ENCODE measurements at regions of chr11 and their contacts with region 1.

Region 1: DNA sequence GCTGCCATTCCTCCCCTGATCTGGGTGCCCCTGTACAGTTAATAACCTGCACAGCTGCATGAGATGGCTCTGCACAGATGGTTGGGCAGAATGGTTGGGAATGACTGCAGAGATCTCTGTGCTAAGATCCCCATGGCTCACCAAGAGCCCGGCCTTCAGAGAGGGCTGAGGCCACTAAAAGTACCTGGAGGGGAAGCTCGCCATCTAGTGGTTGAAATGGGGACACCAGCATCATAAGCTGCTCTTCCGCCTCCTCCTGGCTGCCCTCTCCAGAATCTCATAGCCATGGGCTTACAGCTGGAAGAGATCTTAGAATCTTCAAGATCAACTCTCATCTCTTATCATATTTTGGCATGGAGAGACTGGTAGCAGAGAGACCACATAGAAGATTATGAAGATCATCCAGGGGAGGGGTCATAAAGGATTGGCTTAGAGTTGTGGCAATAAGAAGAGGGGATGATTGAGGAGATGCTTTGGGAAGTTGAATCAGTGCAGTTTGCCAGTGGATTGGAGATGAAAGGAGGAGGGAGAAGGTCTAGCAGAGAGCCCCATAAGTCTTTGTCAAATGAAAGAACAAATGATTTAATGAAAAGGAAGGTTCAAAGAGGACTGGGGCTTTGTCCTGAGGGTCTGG is 22.0 kb upstream of the TLCD5 start:
- DNase-seq: no peak
- H3K4me3 ChIP-seq: no peak overlapping the region
- H3K27me3 ChIP-seq: peaks cover 7% of the 10 kb centered on the region
- CTCF ChIP-seq: peak; percentile 96

Region 2: DNA sequence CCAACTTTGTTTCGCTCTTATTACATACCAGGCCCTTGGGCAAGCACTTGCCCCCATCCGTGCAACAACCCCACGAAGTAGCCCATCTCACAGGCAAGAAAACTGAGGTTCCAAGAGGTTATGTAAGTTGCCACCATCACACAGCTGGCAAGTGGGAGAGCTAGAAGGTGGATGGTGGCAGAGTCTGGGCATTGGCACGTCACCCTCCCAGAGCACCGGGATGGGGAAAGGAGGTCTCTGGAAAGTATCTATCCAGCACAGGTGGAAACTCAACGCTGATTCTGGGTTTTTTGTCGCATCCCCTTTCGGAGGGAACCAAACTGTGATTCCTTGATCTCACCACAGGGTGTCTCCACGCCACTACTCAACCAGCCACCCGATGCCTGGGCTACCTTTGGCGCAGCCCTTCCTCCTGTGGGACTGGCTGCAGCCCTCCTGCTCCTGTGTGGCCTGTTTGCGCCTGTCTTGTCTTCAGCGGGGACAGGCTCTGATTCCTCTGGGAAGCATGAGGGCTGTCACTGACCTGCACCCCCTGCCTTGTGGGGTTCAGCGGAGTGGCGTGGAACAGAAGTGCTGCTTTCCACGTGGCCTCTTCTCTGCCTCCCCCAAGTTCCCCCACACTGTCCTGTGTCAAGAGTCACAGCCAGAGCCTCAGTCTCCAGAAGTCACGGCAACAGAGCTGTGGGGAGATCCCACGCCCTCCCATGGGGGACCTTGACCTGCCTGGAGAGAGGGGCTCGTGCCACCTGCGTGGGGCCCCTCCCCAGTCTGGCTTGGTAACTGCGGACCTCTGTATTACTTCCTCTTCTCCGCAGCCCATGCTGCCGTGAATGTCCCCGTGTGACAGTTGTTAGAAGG is 130.8 kb before region 1 on chr11:
- CTCF ChIA-PET with region 1: interaction called, 187 read pairs
- POLR2A ChIA-PET with region 1: no interaction called
- DNase-seq: no peak
- H3K4me3 ChIP-seq: no peak overlapping the region
- H3K27me3 ChIP-seq: peaks cover 22% of the 10 kb centered on the region
- CTCF ChIP-seq: peak; percentile 80

Region 3: DNA sequence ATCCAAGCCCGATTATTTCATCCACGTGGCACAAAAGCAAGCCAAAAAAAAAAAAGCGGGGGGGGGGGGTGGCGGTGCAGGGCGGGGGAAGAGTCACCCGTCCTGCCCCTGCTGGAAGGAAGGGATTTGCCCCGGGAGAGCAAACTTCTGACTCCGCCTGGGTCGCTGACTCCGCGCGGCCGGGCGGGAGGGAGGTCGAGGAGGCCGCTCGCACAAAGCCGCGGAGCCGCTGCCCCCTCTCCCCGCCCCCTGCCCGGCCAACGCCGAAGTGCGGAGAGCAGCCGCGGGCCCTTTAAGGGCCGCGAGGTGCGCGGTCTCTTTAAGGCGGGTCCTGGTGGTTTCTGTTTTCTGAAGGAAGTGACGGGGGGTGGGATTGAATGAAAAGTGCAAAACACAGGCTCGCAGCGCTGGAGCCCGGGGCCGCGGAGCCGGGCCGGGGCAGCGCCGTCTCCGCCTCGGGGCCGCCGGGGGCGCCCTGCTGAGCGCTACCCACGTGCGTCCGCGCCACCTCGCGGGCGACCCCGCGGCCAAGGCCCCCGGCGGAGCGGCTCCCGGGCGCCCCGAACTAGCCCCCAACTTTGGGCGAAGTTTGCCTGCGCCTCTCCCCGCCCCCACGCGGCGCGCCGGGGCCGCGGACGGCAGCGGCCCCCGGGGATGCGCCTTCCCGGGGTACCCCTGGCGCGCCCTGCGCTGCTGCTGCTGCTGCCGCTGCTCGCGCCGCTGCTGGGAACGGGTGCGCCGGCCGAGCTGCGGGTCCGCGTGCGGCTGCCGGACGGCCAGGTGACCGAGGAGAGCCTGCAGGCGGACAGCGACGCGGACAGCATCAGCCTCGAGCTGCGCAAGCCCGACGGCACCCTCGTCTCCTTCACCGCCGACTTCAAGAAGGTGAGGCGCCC is 92.2 kb before region 1 on chr11 and contains the start of gene OAF:
- CTCF ChIA-PET with region 1: interaction called, 26 read pairs
- POLR2A ChIA-PET with region 1: no interaction called
- DNase-seq: no peak
- H3K4me3 ChIP-seq: peak within 1 kb of the TSS; percentile 72
- H3K27me3 ChIP-seq: no peaks in the 10 kb centered on the region
- CTCF ChIP-seq: no peak
- polyA plus RNA-seq, gene OAF: 32.8 and 47.5 TPM in 2 replicates

Region 4: GRCh38 chr11:120248551-120249278 is 54.4 kb before region 1 on chr11:
- CTCF ChIA-PET with region 1: interaction called, 22 read pairs
- POLR2A ChIA-PET with region 1: no interaction called
- DNase-seq: no peak
- H3K4me3 ChIP-seq: no peak overlapping the region
- H3K27me3 ChIP-seq: peaks cover 27% of the 10 kb centered on the region
- CTCF ChIP-seq: no peak

Region 5: DNA sequence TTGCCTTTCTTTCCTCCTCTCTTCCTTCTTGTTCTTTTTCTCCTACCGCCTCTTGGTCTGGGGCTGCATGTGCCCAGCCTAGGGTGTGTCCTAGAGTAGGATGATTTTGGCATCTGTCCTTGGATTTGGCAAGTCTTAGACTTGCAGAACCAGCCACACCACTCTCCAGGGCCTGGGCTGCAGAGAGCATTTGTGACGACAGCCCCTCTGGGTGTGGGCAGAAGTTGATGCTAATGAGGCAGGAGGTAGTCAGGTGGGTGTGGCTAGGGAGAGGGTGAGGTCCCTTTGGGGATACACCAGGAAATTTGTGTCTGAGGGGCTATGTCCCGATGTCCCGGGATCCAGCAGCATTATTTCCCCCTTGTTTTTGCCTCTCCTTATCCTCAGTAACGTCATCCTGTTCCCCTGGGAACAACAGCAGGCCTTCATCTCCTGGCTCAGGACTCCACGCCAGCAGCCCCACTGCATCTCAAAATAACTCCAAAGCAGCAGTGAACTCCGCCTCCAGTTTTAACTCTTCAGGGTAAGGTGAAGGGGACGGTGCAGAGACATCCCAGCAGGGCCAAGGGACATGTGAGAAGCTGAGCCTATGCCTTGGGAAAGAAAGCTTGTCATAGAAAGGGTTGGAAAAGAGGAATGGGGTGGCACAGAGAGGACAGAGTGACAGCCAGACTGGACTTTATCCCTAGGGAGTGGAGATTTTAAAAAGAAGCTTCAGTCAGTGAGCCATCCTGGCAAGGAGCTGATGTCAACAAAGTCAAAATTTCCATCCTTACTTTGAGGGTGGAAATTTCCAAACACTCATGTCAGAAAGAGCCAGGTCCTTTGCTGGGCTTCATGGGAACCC is 13.9 kb after region 1 on chr11:
- CTCF ChIA-PET with region 1: interaction called, 12 read pairs
- POLR2A ChIA-PET with region 1: no interaction called
- DNase-seq: no peak
- H3K4me3 ChIP-seq: no peak overlapping the region
- H3K27me3 ChIP-seq: peaks cover 10% of the 10 kb centered on the region
- CTCF ChIP-seq: no peak

Region 6: GRCh38 chr11:120335908-120336640 is 33.0 kb after region 1 on chr11 and contains the start of gene ARHGEF12:
- CTCF ChIA-PET with region 1: interaction called, 11 read pairs
- POLR2A ChIA-PET with region 1: no interaction called
- DNase-seq: peak; percentile 66
- H3K4me3 ChIP-seq: peak within 1 kb of the TSS; percentile 71
- H3K27me3 ChIP-seq: no peaks in the 10 kb centered on the region
- CTCF ChIP-seq: peak; percentile 53
- polyA plus RNA-seq, gene ARHGEF12: 16.9 and 31.4 TPM in 2 replicates

Region 7: GRCh38 chr11:120590472-120590871 is 287.4 kb after region 1 on chr11:
- CTCF ChIA-PET with region 1: no interaction called
- POLR2A ChIA-PET with region 1: no interaction called
- DNase-seq: no peak
- H3K4me3 ChIP-seq: no peak overlapping the region
- H3K27me3 ChIP-seq: no peaks in the 10 kb centered on the region; the same call in none of the 2 replicates
- CTCF ChIP-seq: no peak

Measured in BJ (cell line).